MCF 10A (cell line): ENCODE measurements at regions of chr1 and their contacts with region 1.

Region 1: DNA sequence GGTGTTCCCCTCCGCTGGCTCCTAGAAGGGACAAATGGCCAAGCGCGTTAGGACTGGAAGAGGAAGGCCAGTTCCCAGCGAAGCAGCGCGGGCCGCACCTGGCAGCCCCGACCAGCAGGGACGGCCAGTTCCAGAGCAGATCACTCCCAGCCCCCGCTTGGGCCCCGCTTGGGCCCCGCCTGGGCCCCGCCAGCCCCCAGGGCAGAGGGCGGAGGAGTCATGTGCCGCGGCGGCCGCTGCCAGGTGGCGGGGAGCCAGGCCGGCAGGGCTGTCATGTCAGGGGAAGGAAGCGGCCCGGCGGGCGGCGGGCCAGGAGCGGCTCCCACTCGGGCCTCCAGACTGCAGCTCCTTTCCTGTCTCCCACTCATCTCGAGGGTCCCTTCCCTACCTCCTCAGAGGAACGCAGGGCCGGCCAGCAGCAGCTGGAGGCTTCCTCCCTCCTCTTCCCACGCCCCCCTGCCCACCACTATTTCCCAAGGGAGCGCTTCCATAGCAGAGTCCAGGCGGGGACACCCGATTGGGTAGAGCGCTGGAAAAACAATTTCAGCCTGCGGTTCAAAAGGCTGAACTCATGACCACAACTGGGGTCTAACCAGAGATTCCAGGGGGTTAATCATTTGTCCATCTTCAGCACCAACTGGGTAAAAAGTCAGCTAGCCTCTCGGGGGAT is 16.5 kb downstream of the ZNF697 start:
- DNase-seq: peak; percentile 83
- H3K4me3 Mint-ChIP-seq: peak overlapping the region; percentile 38
- H3K27ac Mint-ChIP-seq: no peak overlapping the region
- H3K4me1 Mint-ChIP-seq: peaks cover 9% of the 10 kb centered on the region
- H3K27me3 Mint-ChIP-seq: no peaks in the 10 kb centered on the region
- CTCF ChIP-seq: no peak

Region 2: DNA sequence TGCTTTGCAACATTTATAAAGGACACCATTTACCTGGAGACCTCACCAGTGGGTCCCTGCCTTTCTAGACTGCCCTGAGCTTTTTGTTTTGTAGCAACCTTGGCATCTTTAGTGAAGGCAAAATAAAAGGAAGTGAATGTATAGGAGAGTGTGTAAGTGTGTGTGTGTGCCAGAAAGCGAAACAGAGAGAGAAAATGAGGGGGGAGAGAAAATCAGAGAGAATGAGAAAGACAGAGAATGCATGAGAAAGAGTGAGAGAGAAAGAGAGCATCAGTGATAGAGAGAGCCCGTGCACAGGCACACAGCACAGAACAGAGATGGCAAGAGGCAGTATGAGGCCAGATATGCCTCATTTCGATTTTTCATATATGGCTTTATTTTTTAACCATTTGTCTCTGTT is 67.0 kb before region 1 on chr1:
- CTCF ChIA-PET with region 1: no interaction called
- POLR2A ChIA-PET with region 1: no interaction called
- intact Hi-C with region 1: no loop called
- DNase-seq: no peak
- H3K4me3 Mint-ChIP-seq: no peak overlapping the region
- H3K27ac Mint-ChIP-seq: no peak overlapping the region
- H3K4me1 Mint-ChIP-seq: peaks cover 17% of the 10 kb centered on the region
- H3K27me3 Mint-ChIP-seq: peaks cover 13% of the 10 kb centered on the region
- CTCF ChIP-seq: no peak

Region 3: DNA sequence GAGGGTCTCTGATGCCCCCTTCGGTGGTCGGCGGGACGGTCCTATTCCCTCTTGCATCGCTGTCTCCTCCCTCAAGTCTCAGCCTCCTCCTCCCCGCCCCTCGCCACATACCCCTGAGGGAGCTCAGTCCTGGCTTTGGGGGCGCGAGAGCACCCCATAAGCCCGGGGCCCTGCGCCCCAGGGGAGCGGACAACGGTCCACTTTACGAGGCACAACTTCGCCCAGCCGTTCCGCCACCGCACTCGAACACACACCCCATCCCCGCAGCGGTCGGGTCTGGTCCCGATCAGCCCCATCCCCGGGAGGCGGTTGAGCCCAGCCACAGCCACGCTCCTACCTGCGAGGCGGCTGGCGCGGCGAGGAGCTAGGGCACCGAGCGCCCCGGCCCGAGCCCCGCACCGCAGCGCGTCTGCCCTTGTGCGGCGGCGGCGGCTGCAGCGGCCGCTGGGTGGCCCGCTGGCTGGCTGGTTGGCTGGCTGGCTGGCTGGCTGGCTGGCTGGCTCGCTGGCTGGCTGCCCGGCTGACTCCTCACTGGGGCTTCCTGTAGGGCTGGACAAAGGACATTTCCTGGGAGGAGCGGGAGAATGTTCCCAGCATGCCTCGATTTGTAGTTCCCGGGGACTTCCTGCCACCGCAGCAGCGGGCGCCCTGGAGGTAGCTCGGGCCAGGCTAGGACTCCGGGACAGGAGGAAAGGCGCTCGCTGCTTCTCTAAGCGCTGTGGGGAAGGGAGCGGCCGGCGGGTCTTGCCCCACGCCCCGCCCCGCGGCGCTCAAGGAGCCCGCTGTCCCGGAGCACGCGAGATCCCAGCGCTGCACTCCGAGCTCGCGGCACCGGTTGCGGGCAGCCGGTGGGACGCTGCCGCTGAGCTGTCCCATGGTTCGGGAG is 16.4 kb after region 1 on chr1 and contains the start of gene ZNF697:
- CTCF ChIA-PET with region 1: interaction called, 6 read pairs
- POLR2A ChIA-PET with region 1: interaction called, 16 read pairs
- intact Hi-C with region 1: no loop called
- DNase-seq: peak; percentile 97
- H3K4me3 Mint-ChIP-seq: peak within 1 kb of the TSS; percentile 84
- H3K27ac Mint-ChIP-seq: peak within 1 kb of the TSS; percentile 90
- H3K4me1 Mint-ChIP-seq: peaks cover 51% of the 10 kb centered on the region
- H3K27me3 Mint-ChIP-seq: peaks cover 14% of the 10 kb centered on the region
- CTCF ChIP-seq: no peak
- total RNA-seq, gene ZNF697: 12.2 and 13.2 TPM in 2 replicates